CD8-positive, alpha-beta T cell (primary cell): ENCODE measurements at regions of chr19 and their contacts with region 1.

Region 1: DNA sequence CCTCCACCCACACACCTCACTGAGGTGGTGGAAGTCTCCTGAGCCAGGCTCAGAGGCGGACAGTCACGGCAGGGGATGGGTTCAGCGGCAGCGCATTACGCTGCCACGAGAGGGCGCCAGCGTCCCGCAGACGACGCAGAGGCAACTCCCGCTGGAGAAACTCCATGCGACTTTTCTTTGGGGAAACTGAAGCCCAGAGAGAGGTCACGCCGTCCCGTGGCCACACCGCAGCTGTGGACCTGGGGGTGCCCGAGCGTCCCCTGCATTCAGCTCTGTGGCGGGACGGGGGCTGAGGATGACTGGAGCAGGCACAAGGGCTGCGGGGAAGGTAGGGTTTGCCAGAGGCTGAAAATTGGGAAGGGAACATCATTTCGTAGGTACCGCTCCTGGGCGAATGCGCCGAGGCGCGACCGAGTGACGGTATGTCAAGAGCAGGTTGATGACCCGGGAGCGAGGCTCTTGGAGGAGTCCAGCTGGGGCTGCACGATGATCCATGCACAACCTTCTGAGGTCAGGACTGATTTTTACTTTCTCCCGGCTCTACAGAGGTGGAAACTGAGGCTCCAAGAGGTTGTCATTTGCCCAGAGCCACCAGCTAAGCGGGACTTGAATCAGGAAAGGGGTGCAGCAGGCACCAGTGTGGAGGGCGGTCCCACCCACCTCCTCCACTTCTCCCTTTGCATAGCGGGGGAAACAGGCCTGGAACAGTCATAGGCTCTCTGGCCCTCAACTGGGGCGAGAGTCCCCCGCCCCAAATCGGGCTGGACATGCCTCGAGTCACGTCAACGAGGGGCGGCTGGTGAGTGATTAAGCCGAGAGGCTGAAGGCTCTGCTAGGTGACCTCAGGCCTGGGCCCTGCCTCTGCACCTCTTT is 690 bp upstream of the ARRDC2 start:
- DNase-seq: peak; percentile 66 to 90 (median 80)
- ATAC-seq: peak; percentile 57
- H3K4me3 ChIP-seq: peak overlapping the region; percentile 48 to 61
- H3K4me3 Mint-ChIP-seq: peak overlapping the region; percentile 88
- H3K27ac ChIP-seq: peak overlapping the region; percentile 69 to 72
- H3K27ac Mint-ChIP-seq: peak overlapping the region; percentile 89
- H3K4me1 ChIP-seq: peaks cover 43% of the 10 kb centered on the region
- H3K4me1 Mint-ChIP-seq: peaks cover 40% of the 10 kb centered on the region
- H3K27me3 ChIP-seq: no peaks in the 10 kb centered on the region
- H3K27me3 Mint-ChIP-seq: no peaks in the 10 kb centered on the region
- CTCF ChIP-seq: peak; percentile 97

Region 2: DNA sequence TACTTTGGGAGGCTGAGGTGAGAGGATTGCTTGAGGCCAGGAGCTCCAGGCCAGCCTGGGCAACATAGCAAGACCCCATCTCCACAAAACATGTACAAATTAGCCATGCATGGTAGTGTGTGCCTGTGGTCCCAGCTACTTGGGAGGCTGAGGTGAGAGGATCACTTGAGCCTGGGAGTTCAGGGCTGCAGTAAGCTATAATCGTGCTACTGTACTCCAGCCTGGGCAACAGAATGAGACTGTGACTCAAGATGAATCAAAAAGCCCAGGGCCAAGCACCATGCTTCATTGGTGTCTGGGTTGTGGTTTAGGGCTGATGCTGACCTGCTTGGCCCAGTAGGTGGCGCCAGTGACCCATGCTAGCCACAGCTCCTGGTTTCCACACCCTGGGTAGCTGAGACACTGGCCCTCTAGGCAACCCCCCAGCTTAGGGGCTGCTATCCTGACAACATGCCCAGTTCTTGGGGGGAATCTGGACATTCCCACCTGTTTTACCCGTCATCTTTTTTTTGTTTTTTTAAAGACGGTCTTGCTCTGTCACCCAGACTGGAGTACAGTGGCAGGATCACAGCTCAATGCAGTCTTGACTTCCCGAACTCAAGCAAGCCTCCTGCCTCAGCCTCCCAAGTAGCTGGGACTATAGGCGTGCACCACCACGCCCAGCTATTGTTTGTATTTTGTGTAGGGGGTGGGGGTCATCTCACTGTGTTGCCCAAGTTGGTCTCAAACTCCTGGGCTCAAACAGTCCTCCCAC is 69.0 kb before region 1 on chr19:
- CTCF ChIA-PET with region 1: interaction called, 510 read pairs
- POLR2A ChIA-PET with region 1: interaction called, 21 read pairs
- intact Hi-C with region 1: no loop called
- DNase-seq: peak; percentile 69 to 90 (median 83)
- ATAC-seq: peak; percentile 99
- H3K4me3 ChIP-seq: no peak overlapping the region
- H3K4me3 Mint-ChIP-seq: no peak overlapping the region
- H3K27ac ChIP-seq: no peak overlapping the region
- H3K27ac Mint-ChIP-seq: no peak overlapping the region
- H3K4me1 ChIP-seq: peaks cover 7% of the 10 kb centered on the region
- H3K4me1 Mint-ChIP-seq: peaks cover 8% of the 10 kb centered on the region
- H3K27me3 ChIP-seq: no peaks in the 10 kb centered on the region
- H3K27me3 Mint-ChIP-seq: no peaks in the 10 kb centered on the region
- CTCF ChIP-seq: peak; percentile 82

Region 3: GRCh38 chr19:17966550-17967256 is 40.6 kb before region 1 on chr19 and contains the start of gene KCNN1:
- CTCF ChIA-PET with region 1: no interaction called
- POLR2A ChIA-PET with region 1: no interaction called
- intact Hi-C with region 1: no loop called
- DNase-seq: peak in 3 of 9 experiments; percentile 14 to 31 (median 24)
- ATAC-seq: peak; percentile 48
- H3K4me3 ChIP-seq: no peak within 1 kb of the TSS
- H3K4me3 Mint-ChIP-seq: peak within 1 kb of the TSS; percentile 70
- H3K27ac ChIP-seq: no peak within 1 kb of the TSS
- H3K27ac Mint-ChIP-seq: no peak within 1 kb of the TSS
- H3K4me1 ChIP-seq: peaks cover 4% of the 10 kb centered on the region
- H3K4me1 Mint-ChIP-seq: peaks cover 5% of the 10 kb centered on the region
- H3K27me3 ChIP-seq: peaks cover 10 to 16% of the 10 kb centered on the region in 2 experiments
- H3K27me3 Mint-ChIP-seq: peaks cover 39% of the 10 kb centered on the region
- CTCF ChIP-seq: no peak
- total RNA-seq, gene KCNN1: not detected

Region 4: DNA sequence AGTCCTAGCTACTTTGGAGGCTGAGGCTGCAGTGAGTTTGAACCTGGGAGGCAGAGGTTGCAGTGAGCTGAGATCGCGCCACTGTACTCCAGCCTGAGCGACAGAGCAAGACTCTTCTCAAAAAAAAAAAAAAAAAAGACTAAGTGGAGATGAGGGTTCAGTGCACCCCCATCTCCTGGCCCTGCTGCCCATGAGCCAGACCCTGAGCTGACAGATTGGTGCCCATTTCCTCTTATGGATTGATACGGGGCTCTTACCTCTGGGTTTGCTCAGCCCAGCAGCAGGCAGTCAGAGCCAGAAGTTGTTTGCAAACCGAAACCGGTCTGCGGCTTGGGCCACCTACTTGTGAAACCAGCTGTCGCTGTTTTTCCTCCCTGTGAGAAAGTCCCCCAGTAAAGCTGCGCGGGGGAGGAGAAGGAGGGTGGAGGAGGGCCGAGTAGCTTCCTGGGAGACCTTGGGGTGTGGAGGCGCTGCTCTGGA is 37.6 kb after region 1 on chr19:
- CTCF ChIA-PET with region 1: interaction called, 15 read pairs
- POLR2A ChIA-PET with region 1: interaction called, 14 read pairs
- intact Hi-C with region 1: loop called in 1 of 2 experiments (anchors 1 kb)
- DNase-seq: peak; percentile 68 to 96 (median 87)
- ATAC-seq: peak; percentile 91
- H3K4me3 ChIP-seq: peak overlapping the region; percentile 44
- H3K4me3 Mint-ChIP-seq: peak overlapping the region; percentile 79
- H3K27ac ChIP-seq: peak overlapping the region; percentile 55 to 61
- H3K27ac Mint-ChIP-seq: peak overlapping the region; percentile 95
- H3K4me1 ChIP-seq: peaks cover 33% of the 10 kb centered on the region
- H3K4me1 Mint-ChIP-seq: peaks cover 43% of the 10 kb centered on the region
- H3K27me3 ChIP-seq: no peaks in the 10 kb centered on the region
- H3K27me3 Mint-ChIP-seq: no peaks in the 10 kb centered on the region
- CTCF ChIP-seq: no peak

Region 5: GRCh38 chr19:18091217-18091608 is 83.9 kb after region 1 on chr19:
- CTCF ChIA-PET with region 1: interaction called, 7 read pairs
- POLR2A ChIA-PET with region 1: interaction called, 11 read pairs
- intact Hi-C with region 1: no loop called
- DNase-seq: peak; percentile 54 to 94 (median 82)
- ATAC-seq: peak; percentile 61
- H3K4me3 ChIP-seq: peak overlapping the region in 1 of 2 experiments; percentile 3
- H3K4me3 Mint-ChIP-seq: peak overlapping the region; percentile 56
- H3K27ac ChIP-seq: peak overlapping the region; percentile 54 to 97
- H3K27ac Mint-ChIP-seq: peak overlapping the region; percentile 97
- H3K4me1 ChIP-seq: peaks cover 68% of the 10 kb centered on the region
- H3K4me1 Mint-ChIP-seq: peaks cover 68% of the 10 kb centered on the region
- H3K27me3 ChIP-seq: no peaks in the 10 kb centered on the region
- H3K27me3 Mint-ChIP-seq: no peaks in the 10 kb centered on the region
- CTCF ChIP-seq: no peak

Region 6: DNA sequence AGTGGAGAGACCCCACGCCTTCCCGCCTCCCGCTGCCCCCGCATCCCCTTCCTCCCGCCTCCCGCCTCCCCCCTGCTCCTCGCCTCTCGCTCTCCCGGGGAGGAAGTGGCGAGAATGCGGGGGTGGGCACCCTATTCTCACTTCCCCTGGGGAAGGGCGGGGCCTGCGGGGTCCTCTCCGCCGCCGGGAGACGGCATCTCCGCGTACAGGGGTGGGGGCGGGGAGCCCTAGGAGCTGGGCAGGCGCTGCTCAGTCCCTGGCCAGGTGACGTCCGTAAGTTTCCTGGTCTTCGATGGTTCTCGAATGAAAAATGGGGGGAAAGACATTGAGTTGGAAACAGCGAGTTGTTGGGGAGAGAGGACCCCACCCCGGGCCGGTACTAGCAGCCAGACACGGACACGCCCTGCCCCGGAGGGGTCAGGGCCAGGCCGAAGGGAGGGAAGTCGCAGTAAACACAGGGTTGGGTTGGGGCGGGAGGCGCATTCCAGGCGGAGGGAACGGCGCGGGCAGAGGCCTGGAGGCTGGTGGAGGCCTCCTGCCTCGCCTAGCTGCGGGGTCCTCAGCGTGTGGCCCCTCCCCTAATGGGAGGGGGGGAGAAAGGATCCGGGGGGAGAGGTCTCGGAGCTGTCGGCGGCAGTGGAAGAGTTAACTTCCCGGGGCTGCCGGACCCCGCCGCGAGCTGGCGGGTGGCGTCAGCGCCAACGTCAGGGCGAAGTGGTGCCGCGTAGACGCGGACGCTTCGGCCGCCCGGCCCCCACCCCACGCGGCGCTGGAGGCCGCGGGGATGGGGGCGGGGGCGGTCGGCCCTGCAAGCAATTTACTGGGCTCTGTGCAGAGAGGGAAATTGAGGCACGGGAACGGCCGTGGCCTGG is 284.5 kb after region 1 on chr19:
- CTCF ChIA-PET with region 1: no interaction called
- POLR2A ChIA-PET with region 1: no interaction called
- intact Hi-C with region 1: loop called in 1 of 2 experiments (anchors 10 kb)
- DNase-seq: peak; percentile 66 to 93 (median 82)
- ATAC-seq: peak; percentile 45
- H3K4me3 ChIP-seq: peak overlapping the region; percentile 71 to 91
- H3K4me3 Mint-ChIP-seq: peak overlapping the region; percentile 86
- H3K27ac ChIP-seq: peak overlapping the region; percentile 93 to 100
- H3K27ac Mint-ChIP-seq: peak overlapping the region; percentile 95
- H3K4me1 ChIP-seq: peaks cover 54% of the 10 kb centered on the region
- H3K4me1 Mint-ChIP-seq: peaks cover 55% of the 10 kb centered on the region
- H3K27me3 ChIP-seq: no peaks in the 10 kb centered on the region
- H3K27me3 Mint-ChIP-seq: no peaks in the 10 kb centered on the region
- CTCF ChIP-seq: no peak